ENCODE measurements at regions of chr9 and their contacts with region 1.

Region 1: DNA sequence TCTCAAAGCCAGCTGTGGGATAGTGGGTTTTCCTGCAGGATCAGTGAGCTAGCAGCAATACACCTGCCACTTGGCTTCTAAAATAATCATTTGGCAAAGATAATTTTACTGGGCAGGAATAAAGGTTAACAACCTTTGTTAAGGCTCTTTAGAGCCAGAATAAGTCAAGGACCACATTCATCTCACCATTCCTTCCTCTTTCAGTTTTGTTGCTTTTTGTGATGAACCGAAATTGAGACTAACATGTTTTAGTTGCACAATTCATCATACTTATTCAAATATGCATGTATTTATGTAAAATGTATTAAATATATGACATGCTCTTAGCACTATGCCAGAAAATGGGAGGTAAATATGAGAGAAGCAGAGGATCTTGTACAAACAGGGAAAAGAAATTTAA is 824.4 kb upstream of the TYRP1 start:
- DNase-seq: no peak
- ATAC-seq: no peak
- H3K4me3 ChIP-seq: no peak overlapping the region
- H3K27ac ChIP-seq: no peak overlapping the region
- H3K4me1 ChIP-seq: no peaks in the 10 kb centered on the region
- H3K27me3 ChIP-seq: no peaks in the 10 kb centered on the region
- CTCF ChIP-seq: no peak

Region 2: GRCh38 chr9:11352612-11353011 is 516.2 kb before region 1 on chr9:
- CTCF ChIA-PET with region 1: no interaction called
- POLR2A ChIA-PET with region 1: no interaction called
- intact Hi-C with region 1: loop called (anchors 5 kb)
- DNase-seq: no peak
- ATAC-seq: no peak
- H3K4me3 ChIP-seq: no peak overlapping the region
- H3K27ac ChIP-seq: no peak overlapping the region
- H3K4me1 ChIP-seq: no peaks in the 10 kb centered on the region
- H3K27me3 ChIP-seq: no peaks in the 10 kb centered on the region
- CTCF ChIP-seq: no peak

Measured in PC-3 (cell line).